Mammary epithelial cell (primary cell): ENCODE measurements at regions of chr3 and their contacts with region 1.

Region 1: GRCh38 chr3:100331660-100332059 is 2.9 kb upstream of the NIT2 start:
- DNase-seq: no peak
- H3K4me3 ChIP-seq: no peak overlapping the region
- H3K27ac ChIP-seq: no peak overlapping the region
- H3K4me1 ChIP-seq: peaks cover 10% of the 10 kb centered on the region
- H3K27me3 ChIP-seq: no peaks in the 10 kb centered on the region
- CTCF ChIP-seq: no peak

Region 2: GRCh38 chr3:100175637-100176280 is 155.9 kb before region 1 on chr3:
- CTCF ChIA-PET with region 1: no interaction called
- dilution Hi-C with region 1: no loop called
- in situ Hi-C with region 1: no loop called
- intact Hi-C with region 1: no loop called
- DNase-seq: no peak
- H3K4me3 ChIP-seq: no peak overlapping the region
- H3K27ac ChIP-seq: no peak overlapping the region
- H3K4me1 ChIP-seq: no peaks in the 10 kb centered on the region
- H3K27me3 ChIP-seq: no peaks in the 10 kb centered on the region
- CTCF ChIP-seq: no peak

Region 3: DNA sequence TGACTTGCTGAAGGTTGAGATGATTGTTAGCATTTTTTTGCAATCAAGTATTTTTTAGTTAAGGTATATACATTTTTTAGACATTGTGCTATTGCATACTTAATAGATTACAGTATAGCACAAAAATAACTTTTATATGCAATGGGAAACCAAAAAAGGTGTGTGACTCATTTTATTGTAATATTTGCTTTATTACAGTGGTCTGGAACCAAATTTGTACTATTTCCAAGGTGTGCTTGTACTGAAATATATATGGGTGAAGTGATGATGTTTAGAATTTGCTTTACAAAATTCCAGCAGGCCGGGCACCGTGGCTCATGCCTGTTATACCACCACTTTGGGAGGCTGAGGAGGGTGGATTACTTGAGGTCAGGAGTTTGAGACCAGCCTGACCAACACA is 100.0 kb before region 1 on chr3:
- CTCF ChIA-PET with region 1: no interaction called
- dilution Hi-C with region 1: no loop called
- in situ Hi-C with region 1: no loop called
- intact Hi-C with region 1: no loop called
- DNase-seq: peak; percentile 10
- H3K4me3 ChIP-seq: no peak overlapping the region
- H3K27ac ChIP-seq: no peak overlapping the region
- H3K4me1 ChIP-seq: no peaks in the 10 kb centered on the region
- H3K27me3 ChIP-seq: no peaks in the 10 kb centered on the region
- CTCF ChIP-seq: no peak

Region 4: GRCh38 chr3:100254168-100254777 is 77.4 kb before region 1 on chr3:
- CTCF ChIA-PET with region 1: no interaction called
- dilution Hi-C with region 1: no loop called
- in situ Hi-C with region 1: no loop called
- intact Hi-C with region 1: no loop called
- DNase-seq: peak; percentile 26
- H3K4me3 ChIP-seq: no peak overlapping the region
- H3K27ac ChIP-seq: no peak overlapping the region
- H3K4me1 ChIP-seq: no peaks in the 10 kb centered on the region
- H3K27me3 ChIP-seq: no peaks in the 10 kb centered on the region
- CTCF ChIP-seq: peak; percentile 55 to 77

Region 5: GRCh38 chr3:100370756-100371155 is 39.1 kb after region 1 on chr3:
- CTCF ChIA-PET with region 1: interaction called, 17 read pairs
- dilution Hi-C with region 1: no loop called
- in situ Hi-C with region 1: no loop called
- intact Hi-C with region 1: no loop called
- DNase-seq: no peak
- H3K4me3 ChIP-seq: no peak overlapping the region
- H3K27ac ChIP-seq: no peak overlapping the region
- H3K4me1 ChIP-seq: no peaks in the 10 kb centered on the region
- H3K27me3 ChIP-seq: no peaks in the 10 kb centered on the region
- CTCF ChIP-seq: no peak